ENCODE measurements at regions of chr17 and their contacts with region 1.

Region 1: GRCh38 chr17:29931231-29931932 is 1.4 kb upstream of the SSH2 start:
- DNase-seq: peak; percentile 24 to 71
- ATAC-seq: peak; percentile 55 to 87 (median 77)
- H3K4me3 ChIP-seq: peak overlapping the region in 8 of 10 donors; percentile 61 to 93 (median 80)
- H3K27ac ChIP-seq: peak overlapping the region in 4 of 10 donors; percentile 1 to 89 (median 67)
- H3K4me1 ChIP-seq: peaks cover 0 to 44% (median 38%) of the 10 kb centered on the region in 9 donors
- H3K27me3 ChIP-seq: no peaks in the 10 kb centered on the region
- CTCF ChIP-seq: peak; percentile 81 to 96 (median 88)

Region 2: GRCh38 chr17:29617125-29617480 is 314.3 kb before region 1 on chr17:
- intact Hi-C with region 1: loop called in 3 of 10 experiments (anchors 5 to 10 kb)
- DNase-seq: peak; percentile 56 to 75
- ATAC-seq: no peak
- H3K4me3 ChIP-seq: peak overlapping the region in 7 of 10 donors; percentile 19 to 59 (median 39)
- H3K27ac ChIP-seq: peak overlapping the region in 1 of 10 donors; percentile 83
- H3K4me1 ChIP-seq: peaks cover 14 to 95% (median 77%) of the 10 kb centered on the region in 9 donors
- H3K27me3 ChIP-seq: peaks cover 0 to 46% (median 0%) of the 10 kb centered on the region in 7 donors
- CTCF ChIP-seq: peak in 7 of 9 donors; percentile 26 to 73 (median 41)

Region 3: GRCh38 chr17:29633886-29634285 is 297.5 kb before region 1 on chr17:
- intact Hi-C with region 1: loop called in 5 of 10 experiments (anchors 5 to 10 kb)
- DNase-seq: no peak
- ATAC-seq: peak in 1 of 8 donors; percentile 29
- H3K4me3 ChIP-seq: no peak overlapping the region
- H3K27ac ChIP-seq: peak overlapping the region in 3 of 10 donors; percentile 13 to 20 (median 15)
- H3K4me1 ChIP-seq: peaks cover 0 to 17% (median 7%) of the 10 kb centered on the region in 9 donors
- H3K27me3 ChIP-seq: no peaks in the 10 kb centered on the region
- CTCF ChIP-seq: no peak

Region 4: GRCh38 chr17:29807520-29808351 is 123.6 kb before region 1 on chr17:
- intact Hi-C with region 1: loop called (anchors 1 to 5 kb)
- DNase-seq: peak in 1 of 2 donors; percentile 67
- ATAC-seq: peak; percentile 46 to 80 (median 72)
- H3K4me3 ChIP-seq: peak overlapping the region in 1 of 10 donors; percentile 37
- H3K27ac ChIP-seq: peak overlapping the region in 1 of 10 donors; percentile 74
- H3K4me1 ChIP-seq: peaks cover 0 to 7% (median 0%) of the 10 kb centered on the region in 9 donors
- H3K27me3 ChIP-seq: no peaks in the 10 kb centered on the region
- CTCF ChIP-seq: peak; percentile 64 to 86 (median 83)

Region 5: GRCh38 chr17:30000001-30000754 is 68.8 kb after region 1 on chr17:
- intact Hi-C with region 1: loop called in 1 of 10 experiments (anchors 10 kb)
- DNase-seq: no peak
- ATAC-seq: no peak
- H3K4me3 ChIP-seq: no peak overlapping the region
- H3K27ac ChIP-seq: no peak overlapping the region
- H3K4me1 ChIP-seq: no peaks in the 10 kb centered on the region
- H3K27me3 ChIP-seq: no peaks in the 10 kb centered on the region
- CTCF ChIP-seq: peak in 1 of 9 donors; percentile 6